ENCODE measurements at regions of chr2 and their contacts with region 1.

Region 1: GRCh38 chr2:10408649-10409579 is 39.2 kb downstream of the ODC1 start:
- DNase-seq: peak; percentile 90
- H3K4me3 Mint-ChIP-seq: peak overlapping the region; percentile 60
- H3K27ac Mint-ChIP-seq: peak overlapping the region; percentile 95
- H3K4me1 Mint-ChIP-seq: peaks cover 45% of the 10 kb centered on the region
- H3K27me3 Mint-ChIP-seq: no peaks in the 10 kb centered on the region

Region 2: GRCh38 chr2:10122386-10123280 is 286.3 kb before region 1 on chr2 and contains the start of gene RRM2:
- CTCF ChIA-PET with region 1: interaction called, 97 read pairs
- POLR2A ChIA-PET with region 1: interaction called, 8 read pairs
- intact Hi-C with region 1: loop called (anchors 1 kb)
- DNase-seq: peak; percentile 97
- H3K4me3 Mint-ChIP-seq: peak within 1 kb of the TSS; percentile 97
- H3K27ac Mint-ChIP-seq: peak within 1 kb of the TSS; percentile 97
- H3K4me1 Mint-ChIP-seq: peaks cover 49% of the 10 kb centered on the region
- H3K27me3 Mint-ChIP-seq: peaks cover 3% of the 10 kb centered on the region
- total RNA-seq, gene RRM2: 523 to 528 TPM

Region 3: GRCh38 chr2:10162586-10163497 is 246.1 kb before region 1 on chr2:
- CTCF ChIA-PET with region 1: interaction called, 12 read pairs
- POLR2A ChIA-PET with region 1: interaction called, 4 read pairs
- intact Hi-C with region 1: no loop called
- DNase-seq: no peak
- H3K4me3 Mint-ChIP-seq: no peak overlapping the region
- H3K27ac Mint-ChIP-seq: no peak overlapping the region
- H3K4me1 Mint-ChIP-seq: peaks cover 8% of the 10 kb centered on the region
- H3K27me3 Mint-ChIP-seq: no peaks in the 10 kb centered on the region

Region 4: DNA sequence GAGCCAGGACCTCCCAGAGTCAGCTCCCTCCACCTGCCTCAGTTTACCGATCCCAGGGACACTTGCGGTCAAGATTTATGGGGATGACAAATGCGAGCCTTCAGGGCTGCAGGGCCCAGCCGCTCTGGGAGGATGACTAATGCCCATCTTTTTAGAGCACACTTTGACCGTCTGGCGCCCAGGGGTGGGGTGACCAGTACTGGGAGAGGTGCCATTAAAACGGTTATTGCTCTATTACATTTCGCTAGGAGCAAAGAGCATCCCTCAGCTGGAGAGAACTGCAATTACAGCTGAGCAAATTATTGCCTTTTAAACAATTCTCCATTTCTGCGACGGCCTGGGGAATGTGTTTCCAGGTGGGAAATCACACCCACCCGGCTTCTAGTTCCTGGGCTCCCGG is 148.8 kb before region 1 on chr2:
- CTCF ChIA-PET with region 1: no interaction called
- POLR2A ChIA-PET with region 1: no interaction called
- intact Hi-C with region 1: no loop called
- DNase-seq: no peak
- H3K4me3 Mint-ChIP-seq: no peak overlapping the region
- H3K27ac Mint-ChIP-seq: no peak overlapping the region
- H3K4me1 Mint-ChIP-seq: no peaks in the 10 kb centered on the region
- H3K27me3 Mint-ChIP-seq: no peaks in the 10 kb centered on the region

Region 5: DNA sequence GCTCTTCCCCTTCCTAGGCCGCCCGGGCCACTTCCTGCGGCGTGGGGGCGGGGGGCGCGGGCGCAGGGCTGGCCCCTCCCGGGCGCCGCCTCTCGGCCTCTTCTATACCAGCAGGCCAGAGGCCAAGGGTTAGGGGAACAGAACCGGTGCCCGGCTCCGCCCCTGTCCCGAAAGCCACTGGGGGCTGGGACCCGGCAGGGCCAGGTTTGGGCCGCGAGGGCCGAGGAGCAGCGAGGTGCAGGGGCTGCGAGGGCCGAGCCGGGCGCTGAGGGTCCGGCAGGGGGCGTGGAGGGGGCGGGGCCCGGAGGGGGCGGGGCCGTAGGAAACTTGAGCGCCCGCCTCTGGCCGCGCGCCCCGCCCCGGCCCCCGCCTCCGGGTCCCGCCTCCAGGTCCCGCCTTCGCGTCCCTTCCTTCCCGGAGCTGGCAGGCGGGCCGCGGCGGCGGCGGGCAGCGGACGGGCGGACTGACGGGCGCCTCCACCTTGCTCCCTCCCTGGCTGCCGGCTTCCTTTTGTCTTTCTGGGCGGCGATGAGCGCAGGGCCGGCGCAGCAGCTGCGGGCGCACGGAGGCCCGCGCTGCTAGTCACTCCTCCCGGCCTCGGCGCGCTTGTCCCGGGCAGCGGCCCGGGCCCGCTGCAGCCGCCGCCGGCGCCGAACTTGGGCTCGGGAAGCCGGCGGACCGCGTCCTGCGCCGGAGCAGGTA is 106.3 kb before region 1 on chr2 and contains the start of gene HPCAL1:
- CTCF ChIA-PET with region 1: interaction called, 136 read pairs
- POLR2A ChIA-PET with region 1: interaction called, 28 read pairs
- intact Hi-C with region 1: loop called (anchors 1 kb)
- DNase-seq: peak; percentile 88
- H3K4me3 Mint-ChIP-seq: peak within 1 kb of the TSS; percentile 99
- H3K27ac Mint-ChIP-seq: peak within 1 kb of the TSS; percentile 83
- H3K4me1 Mint-ChIP-seq: peaks cover 72% of the 10 kb centered on the region
- H3K27me3 Mint-ChIP-seq: no peaks in the 10 kb centered on the region
- total RNA-seq, gene HPCAL1: 82.2 to 82.6 TPM

Region 6: DNA sequence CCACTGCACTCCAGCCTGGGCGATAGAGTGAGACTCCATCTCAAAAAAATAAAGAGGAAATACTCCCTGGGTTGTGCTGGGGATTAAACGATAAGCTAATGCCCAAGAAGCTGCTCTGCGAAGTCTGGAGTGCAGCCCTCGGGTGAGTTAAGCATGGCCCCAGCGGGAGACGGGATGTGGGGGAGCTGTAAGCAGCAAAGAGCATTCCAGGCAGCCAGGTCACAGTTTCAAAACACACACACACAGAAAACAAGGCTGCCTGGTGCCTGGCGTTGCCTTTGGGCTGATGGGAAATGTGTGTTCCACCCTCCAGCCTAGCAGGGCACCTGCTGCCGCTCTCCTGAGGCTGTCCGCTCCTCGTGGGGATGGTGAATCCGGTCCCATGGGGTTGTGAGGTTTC is 15.1 kb after region 1 on chr2:
- CTCF ChIA-PET with region 1: interaction called, 18 read pairs
- POLR2A ChIA-PET with region 1: no interaction called
- intact Hi-C with region 1: no loop called
- DNase-seq: no peak
- H3K4me3 Mint-ChIP-seq: no peak overlapping the region
- H3K27ac Mint-ChIP-seq: no peak overlapping the region
- H3K4me1 Mint-ChIP-seq: no peaks in the 10 kb centered on the region
- H3K27me3 Mint-ChIP-seq: no peaks in the 10 kb centered on the region

Region 7: GRCh38 chr2:10457911-10458604 is 49.1 kb after region 1 on chr2:
- CTCF ChIA-PET with region 1: no interaction called
- POLR2A ChIA-PET with region 1: no interaction called
- intact Hi-C with region 1: no loop called
- DNase-seq: no peak
- H3K4me3 Mint-ChIP-seq: no peak overlapping the region
- H3K27ac Mint-ChIP-seq: no peak overlapping the region
- H3K4me1 Mint-ChIP-seq: peaks cover 5% of the 10 kb centered on the region
- H3K27me3 Mint-ChIP-seq: peaks cover 14% of the 10 kb centered on the region

Measured in activated CD4-positive, alpha-beta memory T cell treated with anti-CD3 and anti-CD28 coated beads for 36 hours (primary cell).